ENCODE measurements at regions of chr15 and their contacts with region 1.

Region 1: DNA sequence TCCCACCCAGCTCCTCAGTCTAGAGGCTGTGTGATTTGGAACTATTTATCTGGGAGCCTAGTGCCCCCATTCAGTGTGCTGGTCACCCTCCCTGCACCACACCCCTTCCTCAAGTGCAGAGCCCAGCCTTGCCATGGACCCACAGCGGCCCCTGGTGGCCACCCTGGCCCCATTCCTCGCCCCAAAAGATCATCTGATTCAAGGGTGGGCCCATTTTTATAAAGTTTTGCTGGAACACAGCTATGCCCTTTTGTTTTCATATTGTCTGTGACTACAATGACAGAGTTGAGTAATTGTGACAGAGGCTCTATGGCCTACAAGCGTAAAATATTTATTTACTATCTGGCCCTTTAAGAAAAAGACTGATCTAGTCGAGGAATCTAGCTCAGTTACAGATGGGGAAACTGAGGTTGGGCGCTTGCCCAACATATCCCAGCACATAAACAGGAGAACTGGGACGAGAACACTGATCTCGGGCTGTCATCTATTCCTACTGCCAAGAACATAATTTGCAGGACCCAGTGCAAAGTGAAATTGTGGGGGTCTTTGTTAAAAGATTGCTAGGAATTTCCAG is 1.8 kb downstream of the FES start:
- DNase-seq: peak; percentile 89
- ATAC-seq: peak; percentile 47
- H3K4me3 Mint-ChIP-seq: no peak overlapping the region
- H3K27ac Mint-ChIP-seq: no peak overlapping the region
- H3K4me1 Mint-ChIP-seq: peaks cover 22% of the 10 kb centered on the region
- H3K27me3 Mint-ChIP-seq: no peaks in the 10 kb centered on the region
- CTCF ChIP-seq: peak; percentile 93

Region 2: GRCh38 chr15:90648137-90649070 is 237.7 kb before region 1 on chr15:
- CTCF ChIA-PET with region 1: interaction called, 46 read pairs
- POLR2A ChIA-PET with region 1: no interaction called
- DNase-seq: peak; percentile 59
- ATAC-seq: peak; percentile 83
- H3K4me3 Mint-ChIP-seq: no peak overlapping the region
- H3K27ac Mint-ChIP-seq: no peak overlapping the region
- H3K4me1 Mint-ChIP-seq: peaks cover 19% of the 10 kb centered on the region
- H3K27me3 Mint-ChIP-seq: no peaks in the 10 kb centered on the region
- CTCF ChIP-seq: peak; percentile 89

Region 3: DNA sequence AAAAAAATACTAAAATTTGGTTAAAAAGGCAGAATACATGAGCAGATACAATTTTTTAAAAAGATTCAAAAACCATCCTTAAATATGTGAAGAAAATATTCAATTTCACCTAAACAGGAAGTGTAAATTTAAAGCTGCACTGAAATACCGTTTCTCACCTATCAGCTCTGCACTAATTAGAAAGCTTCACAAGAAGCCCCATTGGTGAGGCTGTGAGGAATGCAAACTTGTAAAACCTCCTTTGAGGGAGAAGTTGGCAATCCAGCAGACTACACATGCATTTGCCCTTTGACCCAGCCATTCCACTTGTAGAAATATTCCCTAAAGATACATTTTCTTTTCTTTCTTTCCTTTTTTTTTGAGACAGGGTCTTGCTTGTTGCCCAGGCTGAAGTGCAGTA is 150.2 kb before region 1 on chr15:
- CTCF ChIA-PET with region 1: no interaction called
- POLR2A ChIA-PET with region 1: no interaction called
- DNase-seq: no peak
- ATAC-seq: no peak
- H3K4me3 Mint-ChIP-seq: no peak overlapping the region
- H3K27ac Mint-ChIP-seq: no peak overlapping the region
- H3K4me1 Mint-ChIP-seq: no peaks in the 10 kb centered on the region
- H3K27me3 Mint-ChIP-seq: no peaks in the 10 kb centered on the region
- CTCF ChIP-seq: no peak

Region 4: DNA sequence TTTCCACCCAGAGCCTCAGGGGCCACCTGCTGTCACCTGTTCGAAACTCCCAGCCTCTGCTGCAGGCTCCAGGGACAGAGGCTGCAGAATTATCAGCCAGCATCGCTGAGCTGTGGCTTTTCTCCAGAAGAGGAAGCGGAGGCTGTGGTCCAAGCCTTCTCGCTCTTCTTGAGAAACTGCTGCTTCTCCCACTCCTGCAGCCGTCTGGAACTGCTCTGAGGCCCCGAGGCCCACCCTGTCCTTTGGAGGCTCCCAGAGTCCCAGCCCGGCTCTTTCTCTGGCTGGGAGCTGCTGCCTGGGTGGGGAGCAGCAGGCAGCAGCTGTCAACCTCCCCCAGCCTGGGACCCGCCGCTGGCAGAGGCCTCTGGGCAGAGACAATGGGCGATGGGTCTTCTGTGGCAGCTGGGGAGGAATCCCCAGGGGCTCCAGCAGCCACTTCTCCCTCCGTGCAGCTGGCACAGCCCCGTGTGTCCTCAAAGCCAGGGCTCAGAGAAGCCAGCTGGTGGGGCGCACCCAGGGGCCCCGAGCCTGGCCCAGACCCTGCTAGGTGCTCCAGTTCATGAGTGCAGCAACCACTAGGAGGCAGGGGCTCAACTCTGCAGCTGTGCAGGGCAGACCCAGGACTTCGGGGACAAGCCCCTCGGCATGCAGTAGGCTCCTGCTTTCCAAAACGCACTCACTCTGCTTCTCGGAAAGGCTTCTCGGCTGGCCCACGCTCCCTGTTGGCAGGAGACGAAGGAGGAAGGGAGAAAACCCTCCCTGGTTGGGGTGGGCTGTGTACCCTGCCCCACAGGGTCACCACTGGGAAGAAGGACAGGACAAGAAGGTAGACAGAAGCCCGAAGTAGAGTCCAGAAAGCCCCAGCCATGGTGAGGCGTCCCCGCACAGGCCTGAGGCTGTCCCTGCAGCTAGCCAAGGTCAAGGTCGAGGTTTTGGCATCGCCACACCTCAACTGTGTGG is 67.6 kb before region 1 on chr15:
- CTCF ChIA-PET with region 1: interaction called, 51 read pairs
- POLR2A ChIA-PET with region 1: no interaction called
- DNase-seq: peak; percentile 50
- ATAC-seq: peak; percentile 75
- H3K4me3 Mint-ChIP-seq: no peak overlapping the region
- H3K27ac Mint-ChIP-seq: peak overlapping the region; percentile 93
- H3K4me1 Mint-ChIP-seq: peaks cover 35% of the 10 kb centered on the region
- H3K27me3 Mint-ChIP-seq: no peaks in the 10 kb centered on the region
- CTCF ChIP-seq: no peak

Region 5: DNA sequence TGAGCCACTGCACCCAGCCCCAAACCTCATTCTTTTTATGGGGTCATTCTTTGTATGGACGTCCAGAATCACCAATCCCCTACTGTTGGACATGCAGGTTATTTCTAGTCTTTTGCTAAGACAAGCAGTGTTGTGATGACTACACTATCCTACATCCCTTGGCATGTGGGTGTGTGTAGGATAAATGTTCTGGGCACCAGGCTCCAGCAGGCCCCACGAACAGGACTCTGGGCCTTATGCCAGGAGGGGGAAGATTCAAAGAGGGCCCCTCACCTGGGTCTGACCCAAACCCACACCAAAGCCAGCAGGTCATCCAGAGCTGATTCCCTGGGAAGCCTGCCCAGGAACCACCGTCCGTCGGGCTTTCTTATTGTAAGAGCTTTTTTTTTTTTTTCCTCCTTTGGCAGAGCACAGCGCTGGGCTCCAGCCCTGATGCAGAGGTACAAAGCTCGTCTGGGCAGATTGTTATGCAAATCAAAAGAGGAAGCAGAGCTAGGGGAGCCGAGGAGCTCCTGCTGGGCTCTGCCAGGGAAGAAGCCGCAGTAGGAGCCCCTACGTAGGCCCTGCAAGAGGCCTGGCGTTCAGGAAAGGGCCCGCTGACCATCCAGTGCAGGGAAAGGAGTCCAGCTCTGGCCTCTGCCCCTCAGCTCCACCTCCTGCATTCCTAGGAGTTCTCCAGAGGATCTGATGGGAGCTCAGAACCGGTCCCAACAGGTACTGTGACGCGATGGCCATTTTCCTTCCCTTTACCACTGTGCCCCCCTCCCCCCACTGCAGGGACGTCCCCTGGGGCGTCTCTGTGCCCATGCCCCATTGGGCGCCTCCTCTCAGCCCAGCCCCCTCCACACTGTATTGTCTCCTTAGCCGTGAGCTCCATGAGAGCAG is 46.7 kb before region 1 on chr15:
- CTCF ChIA-PET with region 1: interaction called, 29 read pairs
- POLR2A ChIA-PET with region 1: interaction called, 4 read pairs
- DNase-seq: peak; percentile 72
- ATAC-seq: peak; percentile 93
- H3K4me3 Mint-ChIP-seq: peak overlapping the region; percentile 22
- H3K27ac Mint-ChIP-seq: peak overlapping the region; percentile 93
- H3K4me1 Mint-ChIP-seq: peaks cover 53% of the 10 kb centered on the region
- H3K27me3 Mint-ChIP-seq: no peaks in the 10 kb centered on the region
- CTCF ChIP-seq: no peak

Region 6: GRCh38 chr15:90869601-90870353 is 16.4 kb before region 1 on chr15:
- CTCF ChIA-PET with region 1: interaction called, 27 read pairs
- POLR2A ChIA-PET with region 1: interaction called, 8 read pairs
- DNase-seq: peak; percentile 69
- ATAC-seq: peak; percentile 39
- H3K4me3 Mint-ChIP-seq: peak overlapping the region; percentile 75
- H3K27ac Mint-ChIP-seq: peak overlapping the region; percentile 91
- H3K4me1 Mint-ChIP-seq: peaks cover 60% of the 10 kb centered on the region
- H3K27me3 Mint-ChIP-seq: no peaks in the 10 kb centered on the region; the same call in 1 of the 2 replicates
- CTCF ChIP-seq: no peak

Region 7: GRCh38 chr15:91007266-91007665 is 121.1 kb after region 1 on chr15:
- CTCF ChIA-PET with region 1: no interaction called
- POLR2A ChIA-PET with region 1: no interaction called
- DNase-seq: no peak
- ATAC-seq: no peak
- H3K4me3 Mint-ChIP-seq: no peak overlapping the region
- H3K27ac Mint-ChIP-seq: no peak overlapping the region
- H3K4me1 Mint-ChIP-seq: no peaks in the 10 kb centered on the region
- H3K27me3 Mint-ChIP-seq: no peaks in the 10 kb centered on the region; the same call in 1 of the 2 replicates
- CTCF ChIP-seq: no peak

Measured in WTC11 (cell line).